Tibial artery (tissue), 4 donors: ENCODE measurements at regions of chr6 and their contacts with region 1.

Region 1: GRCh38 chr6:108113557-108114519 is 39.3 kb upstream of the OSTM1 start:
- DNase-seq: no peak
- H3K4me3 ChIP-seq: peak overlapping the region; percentile 18 to 48
- H3K27ac ChIP-seq: no peak overlapping the region
- H3K4me1 ChIP-seq: peaks cover 0 to 49% (median 35%) of the 10 kb centered on the region in 4 donors
- H3K27me3 ChIP-seq: peaks cover 0 to 58% of the 10 kb centered on the region in 2 donors
- CTCF ChIP-seq: peak; percentile 48 to 64

Region 2: DNA sequence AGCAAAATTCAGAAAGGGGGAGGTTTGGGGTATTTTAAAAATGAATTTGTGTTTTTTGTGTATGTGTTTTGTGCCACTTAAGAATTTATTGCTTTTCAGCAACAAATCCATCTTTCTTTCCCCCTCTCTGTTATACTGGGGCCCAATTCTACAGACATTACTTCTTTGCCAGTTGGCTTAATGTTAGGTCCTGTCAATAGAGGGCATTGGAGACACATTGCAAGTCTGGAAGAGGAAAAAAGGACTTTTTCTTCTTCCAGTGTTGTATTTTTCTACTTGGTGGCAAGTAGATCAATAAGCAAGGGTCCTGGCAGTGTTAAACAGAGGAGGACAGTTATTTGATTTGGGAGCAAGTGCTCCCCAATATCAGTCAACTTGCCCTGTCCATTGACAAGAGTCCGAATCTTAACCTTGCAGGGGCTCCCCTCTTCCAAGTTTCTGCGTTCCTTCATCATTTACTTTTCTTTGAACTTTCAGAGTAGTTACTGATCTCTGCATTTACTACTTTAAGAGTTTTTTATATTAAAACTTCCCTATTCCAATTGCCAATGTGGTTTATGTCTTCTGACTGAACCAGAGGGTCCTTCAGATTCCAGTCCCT is 313.2 kb before region 1 on chr6:
- intact Hi-C with region 1: no loop called
- DNase-seq: no peak
- H3K4me3 ChIP-seq: no peak overlapping the region
- H3K27ac ChIP-seq: no peak overlapping the region
- H3K4me1 ChIP-seq: no peaks in the 10 kb centered on the region
- H3K27me3 ChIP-seq: peaks cover 0 to 5% of the 10 kb centered on the region in 2 donors
- CTCF ChIP-seq: no peak

Region 3: GRCh38 chr6:108492131-108492766 is 378.4 kb after region 1 on chr6:
- intact Hi-C with region 1: loop called (anchors 10 kb)
- DNase-seq: no peak
- H3K4me3 ChIP-seq: no peak overlapping the region
- H3K27ac ChIP-seq: no peak overlapping the region
- H3K4me1 ChIP-seq: no peaks in the 10 kb centered on the region
- H3K27me3 ChIP-seq: no peaks in the 10 kb centered on the region
- CTCF ChIP-seq: peak; percentile 31 to 34

Region 4: DNA sequence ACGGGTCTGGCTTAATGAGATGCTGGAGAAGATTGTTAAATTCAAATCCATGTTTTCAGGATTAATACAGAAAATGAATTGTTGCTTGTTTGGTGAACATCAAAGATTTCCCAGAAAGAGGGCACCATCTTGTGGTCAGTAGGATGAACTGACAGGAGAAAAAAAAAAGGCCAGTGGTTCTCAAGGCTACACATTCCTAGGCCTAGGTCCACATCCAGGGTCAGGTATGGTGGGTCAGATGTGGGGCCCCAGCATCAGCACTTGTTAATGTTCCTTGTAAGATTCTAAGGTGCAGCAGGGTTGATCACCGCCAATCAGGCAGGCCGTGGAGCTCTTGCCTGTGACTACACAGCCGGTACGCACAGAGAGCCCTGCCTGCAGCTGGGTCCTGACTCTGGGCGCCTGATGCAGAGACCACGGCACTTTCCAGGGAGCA is 412.9 kb after region 1 on chr6:
- intact Hi-C with region 1: loop called (anchors 5 kb)
- DNase-seq: no peak
- H3K4me3 ChIP-seq: no peak overlapping the region
- H3K27ac ChIP-seq: no peak overlapping the region
- H3K4me1 ChIP-seq: no peaks in the 10 kb centered on the region
- H3K27me3 ChIP-seq: peaks cover 0 to 3% of the 10 kb centered on the region in 2 donors
- CTCF ChIP-seq: peak; percentile 76 to 86